Activated CD4-positive, alpha-beta T cell treated with anti-CD3 and anti-CD28 coated beads, Interleukin-2, amount 10 ng/mL, durations not matched to agents 7 days and 5 days (primary cell): ENCODE measurements at regions of chr2 and their contacts with region 1.

Region 1: DNA sequence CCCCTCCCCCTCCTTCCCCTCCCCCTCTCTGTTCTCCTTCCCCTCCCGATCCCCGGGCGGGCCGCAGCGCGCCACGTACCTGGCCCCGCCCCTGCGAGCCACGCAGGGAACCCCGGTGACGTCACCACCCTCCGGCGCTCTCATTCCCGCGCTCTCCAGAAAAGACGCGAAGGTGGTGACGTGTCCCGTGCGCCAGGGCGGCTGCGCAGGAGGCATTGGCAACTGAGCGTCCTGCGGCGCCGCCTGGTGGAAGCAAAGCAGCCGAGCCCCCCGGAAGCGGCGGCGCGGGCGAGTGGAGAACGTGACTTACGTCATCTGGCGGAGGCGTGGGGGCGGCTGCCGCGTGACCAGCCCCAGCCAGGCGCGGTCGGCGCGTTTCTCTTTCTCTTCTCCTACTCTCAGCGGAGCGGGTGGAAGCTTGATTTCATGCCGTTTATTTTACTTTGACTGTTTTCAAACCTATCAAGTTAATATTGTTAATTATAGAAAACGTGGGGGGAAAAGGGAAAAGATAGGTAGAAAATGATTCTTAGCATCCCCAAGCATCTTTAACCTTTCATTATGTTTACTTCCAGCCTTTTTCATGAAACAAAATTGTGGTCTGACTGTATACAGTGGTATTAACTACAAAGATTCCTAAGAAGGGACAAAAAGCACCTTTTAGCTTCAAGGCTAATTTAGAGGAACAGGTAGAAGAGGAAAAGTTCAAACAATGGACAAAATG is 48.1 kb downstream of the C2orf42 start:
- DNase-seq: peak; percentile 100
- H3K4me3 Mint-ChIP-seq: peak overlapping the region; percentile 79
- H3K27ac Mint-ChIP-seq: peak overlapping the region; percentile 97
- H3K4me1 Mint-ChIP-seq: peaks cover 71% of the 10 kb centered on the region
- H3K27me3 Mint-ChIP-seq: no peaks in the 10 kb centered on the region

Region 2: DNA sequence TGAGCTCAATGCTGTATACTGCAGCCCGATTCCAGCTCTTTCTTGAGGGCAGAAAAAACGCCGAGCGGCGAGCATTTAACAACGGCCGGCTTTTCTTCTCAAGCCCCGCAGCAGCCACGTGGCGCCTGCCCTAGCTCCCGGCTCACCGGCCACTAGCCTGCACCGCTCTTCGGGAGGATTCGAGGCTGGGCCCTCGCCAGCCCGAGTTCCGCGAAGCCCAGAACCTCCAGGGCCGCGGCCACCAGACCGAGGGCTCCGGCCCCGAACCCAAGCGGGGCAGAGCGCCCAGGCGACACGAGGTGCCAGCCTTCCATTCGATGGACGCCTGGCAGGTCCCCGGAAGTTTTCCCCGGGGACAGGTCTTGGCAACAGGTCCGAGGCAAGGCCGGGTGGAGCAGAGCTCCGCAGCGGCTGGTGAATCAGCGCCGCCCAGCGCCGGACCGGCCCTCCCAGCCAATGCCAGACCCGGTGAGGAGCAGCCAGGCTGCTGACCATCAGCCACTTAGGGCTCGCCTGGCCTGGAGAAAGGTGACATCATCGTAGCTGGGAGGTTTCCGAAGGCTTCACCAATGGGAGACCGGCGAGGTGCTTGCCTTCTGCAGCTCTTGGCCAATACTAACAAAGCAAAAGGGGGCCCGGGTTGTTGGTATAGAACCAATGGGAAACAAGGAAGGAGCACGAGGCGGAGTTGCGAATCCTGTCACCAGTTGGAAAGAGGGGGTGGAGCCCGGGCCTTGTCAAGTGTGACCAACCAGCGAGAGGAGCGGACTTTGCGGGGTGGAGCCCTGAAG is 228.4 kb before region 1 on chr2:
- CTCF ChIA-PET with region 1: interaction called, 29 read pairs
- POLR2A ChIA-PET with region 1: interaction called, 4 read pairs
- DNase-seq: peak; percentile 100
- H3K4me3 Mint-ChIP-seq: peak overlapping the region; percentile 81
- H3K27ac Mint-ChIP-seq: peak overlapping the region; percentile 90
- H3K4me1 Mint-ChIP-seq: peaks cover 43% of the 10 kb centered on the region
- H3K27me3 Mint-ChIP-seq: no peaks in the 10 kb centered on the region

Region 3: GRCh38 chr2:70080610-70081200 is 62.0 kb before region 1 on chr2:
- CTCF ChIA-PET with region 1: interaction called, 10 read pairs
- POLR2A ChIA-PET with region 1: no interaction called
- DNase-seq: no peak
- H3K4me3 Mint-ChIP-seq: no peak overlapping the region
- H3K27ac Mint-ChIP-seq: no peak overlapping the region
- H3K4me1 Mint-ChIP-seq: peaks cover 68% of the 10 kb centered on the region
- H3K27me3 Mint-ChIP-seq: no peaks in the 10 kb centered on the region

Region 4: GRCh38 chr2:70094978-70095719 is 47.6 kb before region 1 on chr2:
- CTCF ChIA-PET with region 1: interaction called, 13 read pairs
- POLR2A ChIA-PET with region 1: no interaction called
- DNase-seq: peak; percentile 74
- H3K4me3 Mint-ChIP-seq: peak overlapping the region; percentile 71
- H3K27ac Mint-ChIP-seq: peak overlapping the region; percentile 95
- H3K4me1 Mint-ChIP-seq: peaks cover 51% of the 10 kb centered on the region
- H3K27me3 Mint-ChIP-seq: no peaks in the 10 kb centered on the region

Region 5: GRCh38 chr2:70132244-70133126 is 10.3 kb before region 1 on chr2:
- CTCF ChIA-PET with region 1: interaction called, 16 read pairs
- POLR2A ChIA-PET with region 1: interaction called, 3 read pairs
- DNase-seq: peak; percentile 62
- H3K4me3 Mint-ChIP-seq: peak overlapping the region; percentile 79
- H3K27ac Mint-ChIP-seq: peak overlapping the region; percentile 97
- H3K4me1 Mint-ChIP-seq: peaks cover 77% of the 10 kb centered on the region
- H3K27me3 Mint-ChIP-seq: no peaks in the 10 kb centered on the region